Activated CD4-positive, alpha-beta memory T cell treated with anti-CD3 and anti-CD28 coated beads for 36 hours (primary cell): ENCODE measurements at regions of chr7 and their contacts with region 1.

Region 1: GRCh38 chr7:80047856-80048459 is 86.7 kb upstream of the GNAI1 start:
- DNase-seq: no peak
- H3K4me3 Mint-ChIP-seq: no peak overlapping the region
- H3K27ac Mint-ChIP-seq: no peak overlapping the region
- H3K4me1 Mint-ChIP-seq: no peaks in the 10 kb centered on the region
- H3K27me3 Mint-ChIP-seq: no peaks in the 10 kb centered on the region

Region 2: DNA sequence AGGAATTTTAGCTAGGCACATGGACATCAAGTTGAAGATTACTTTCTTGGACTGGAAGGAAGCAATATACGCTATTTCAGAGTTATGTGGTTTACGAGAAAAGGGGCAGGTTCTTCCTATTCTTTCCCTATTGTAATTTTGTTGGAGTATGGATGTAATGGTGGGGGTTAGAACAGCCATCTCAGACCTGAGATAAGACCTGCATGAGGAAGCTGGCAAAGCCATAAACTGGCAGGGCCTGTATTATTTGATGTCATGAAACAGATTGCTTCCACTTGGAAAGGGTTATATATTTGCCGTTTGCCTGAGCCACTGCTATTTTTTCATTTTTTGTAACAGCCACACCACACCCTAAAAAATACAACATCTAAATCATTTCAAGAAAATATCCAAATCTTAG is 374.0 kb before region 1 on chr7:
- CTCF ChIA-PET with region 1: no interaction called
- POLR2A ChIA-PET with region 1: no interaction called
- intact Hi-C with region 1: loop called (anchors 5 kb)
- DNase-seq: no peak
- H3K4me3 Mint-ChIP-seq: no peak overlapping the region
- H3K27ac Mint-ChIP-seq: no peak overlapping the region
- H3K4me1 Mint-ChIP-seq: no peaks in the 10 kb centered on the region
- H3K27me3 Mint-ChIP-seq: no peaks in the 10 kb centered on the region

Region 3: GRCh38 chr7:80060218-80060806 is 12.4 kb after region 1 on chr7:
- CTCF ChIA-PET with region 1: no interaction called
- POLR2A ChIA-PET with region 1: no interaction called
- intact Hi-C with region 1: no loop called
- DNase-seq: no peak
- H3K4me3 Mint-ChIP-seq: no peak overlapping the region
- H3K27ac Mint-ChIP-seq: no peak overlapping the region
- H3K4me1 Mint-ChIP-seq: no peaks in the 10 kb centered on the region
- H3K27me3 Mint-ChIP-seq: no peaks in the 10 kb centered on the region